ENCODE measurements at regions of chr16 and their contacts with region 1.

Region 1: GRCh38 chr16:89720813-89721545 is at the starts of genes VPS9D1 and ZNF276:
- DNase-seq: peak; percentile 81 to 84 (median 81)
- H3K4me3 ChIP-seq: peak within 1 kb of the TSS; percentile 78 to 96
- H3K4me3 Mint-ChIP-seq: peak within 1 kb of the TSS; percentile 92 to 99 (median 99)
- H3K27ac ChIP-seq: peak within 1 kb of the TSS; percentile 89
- H3K27ac Mint-ChIP-seq: peak within 1 kb of the TSS; percentile 97 to 100 (median 99)
- H3K4me1 ChIP-seq: peaks cover 48% of the 10 kb centered on the region
- H3K4me1 Mint-ChIP-seq: peaks cover 13 to 35% (median 25%) of the 10 kb centered on the region in 4 donors
- H3K27me3 ChIP-seq: no peaks in the 10 kb centered on the region
- H3K27me3 Mint-ChIP-seq: no peaks in the 10 kb centered on the region
- total RNA-seq, gene VPS9D1: 13.0 to 13.6 TPM
- total RNA-seq, gene ZNF276: 141 to 143 TPM

Region 2: GRCh38 chr16:88533932-88534732 is 1186.8 kb before region 1 on chr16:
- CTCF ChIA-PET with region 1: no interaction called
- POLR2A ChIA-PET with region 1: no interaction called
- intact Hi-C with region 1: no loop called
- DNase-seq: peak; percentile 62 to 82 (median 78)
- H3K4me3 ChIP-seq: no peak overlapping the region
- H3K4me3 Mint-ChIP-seq: peak overlapping the region in 5 of 8 donors; percentile 32 to 79 (median 43)
- H3K27ac ChIP-seq: peak overlapping the region; percentile 43
- H3K27ac Mint-ChIP-seq: peak overlapping the region in 1 of 7 donors; percentile 83
- H3K4me1 ChIP-seq: peaks cover 10% of the 10 kb centered on the region
- H3K4me1 Mint-ChIP-seq: peaks cover 5 to 18% (median 6%) of the 10 kb centered on the region in 4 donors
- H3K27me3 ChIP-seq: no peaks in the 10 kb centered on the region
- H3K27me3 Mint-ChIP-seq: no peaks in the 10 kb centered on the region

Region 3: GRCh38 chr16:89706507-89707263 is 14.3 kb before region 1 on chr16:
- CTCF ChIA-PET with region 1: interaction called, 25 read pairs
- POLR2A ChIA-PET with region 1: interaction called, 59 read pairs
- intact Hi-C with region 1: loop called (anchors 1 kb)
- DNase-seq: no peak
- H3K4me3 ChIP-seq: no peak overlapping the region
- H3K4me3 Mint-ChIP-seq: peak overlapping the region in 1 of 8 donors; percentile 43
- H3K27ac ChIP-seq: no peak overlapping the region
- H3K27ac Mint-ChIP-seq: no peak overlapping the region
- H3K4me1 ChIP-seq: peaks cover 13% of the 10 kb centered on the region
- H3K4me1 Mint-ChIP-seq: peaks cover 3 to 21% (median 12%) of the 10 kb centered on the region in 4 donors
- H3K27me3 ChIP-seq: no peaks in the 10 kb centered on the region
- H3K27me3 Mint-ChIP-seq: no peaks in the 10 kb centered on the region

Region 4: DNA sequence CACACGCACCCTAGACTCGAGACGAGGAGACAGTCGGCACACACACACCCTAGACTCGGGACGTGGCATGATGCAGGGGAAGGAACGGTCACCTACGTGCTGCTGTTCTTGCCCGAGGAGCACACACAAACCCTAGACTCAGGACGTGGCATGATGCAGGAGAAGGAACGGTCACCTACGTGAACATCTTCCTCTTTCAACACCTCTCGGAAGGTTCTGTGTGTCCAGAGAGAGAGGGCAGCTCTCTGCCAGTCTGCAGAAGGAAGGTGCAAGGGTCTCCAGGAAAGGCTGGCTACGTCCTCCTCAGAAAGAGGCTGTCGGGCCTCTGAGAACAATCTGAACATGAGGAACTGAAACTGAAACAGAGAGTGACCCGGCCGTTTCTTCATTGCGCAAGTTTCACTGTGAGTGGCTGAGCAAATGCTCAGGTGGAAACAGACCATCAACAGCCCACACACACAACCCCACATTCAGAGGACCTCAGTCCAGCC is 43.8 kb after region 1 on chr16:
- CTCF ChIA-PET with region 1: interaction called, 7 read pairs
- POLR2A ChIA-PET with region 1: interaction called, 50 read pairs
- intact Hi-C with region 1: loop called (anchors 1 kb)
- DNase-seq: peak; percentile 26 to 67 (median 35)
- H3K4me3 ChIP-seq: peak overlapping the region; percentile 49 to 56
- H3K4me3 Mint-ChIP-seq: peak overlapping the region; percentile 87 to 95 (median 92)
- H3K27ac ChIP-seq: peak overlapping the region; percentile 75
- H3K27ac Mint-ChIP-seq: peak overlapping the region; percentile 81 to 98 (median 96)
- H3K4me1 ChIP-seq: peaks cover 50% of the 10 kb centered on the region
- H3K4me1 Mint-ChIP-seq: peaks cover 32 to 53% (median 45%) of the 10 kb centered on the region in 4 donors
- H3K27me3 ChIP-seq: no peaks in the 10 kb centered on the region
- H3K27me3 Mint-ChIP-seq: no peaks in the 10 kb centered on the region

Region 5: GRCh38 chr16:89795676-89796075 is 74.7 kb after region 1 on chr16:
- CTCF ChIA-PET with region 1: interaction called, 23 read pairs
- POLR2A ChIA-PET with region 1: interaction called, 8 read pairs
- intact Hi-C with region 1: loop called (anchors 1 kb)
- DNase-seq: no peak
- H3K4me3 ChIP-seq: no peak overlapping the region
- H3K4me3 Mint-ChIP-seq: no peak overlapping the region
- H3K27ac ChIP-seq: no peak overlapping the region
- H3K27ac Mint-ChIP-seq: no peak overlapping the region
- H3K4me1 ChIP-seq: no peaks in the 10 kb centered on the region
- H3K4me1 Mint-ChIP-seq: peaks cover 6 to 14% (median 8%) of the 10 kb centered on the region in 4 donors
- H3K27me3 ChIP-seq: no peaks in the 10 kb centered on the region
- H3K27me3 Mint-ChIP-seq: no peaks in the 10 kb centered on the region

Region 6: GRCh38 chr16:89873972-89874689 is 153.2 kb after region 1 on chr16:
- CTCF ChIA-PET with region 1: interaction called, 5 read pairs
- POLR2A ChIA-PET with region 1: interaction called, 29 read pairs
- intact Hi-C with region 1: no loop called
- DNase-seq: peak; percentile 93 to 97 (median 94)
- H3K4me3 ChIP-seq: peak overlapping the region in 1 of 2 donors; percentile 88
- H3K4me3 Mint-ChIP-seq: peak overlapping the region; percentile 77 to 97 (median 92)
- H3K27ac ChIP-seq: peak overlapping the region; percentile 98
- H3K27ac Mint-ChIP-seq: peak overlapping the region; percentile 96 to 99 (median 98)
- H3K4me1 ChIP-seq: peaks cover 27% of the 10 kb centered on the region
- H3K4me1 Mint-ChIP-seq: peaks cover 4 to 31% (median 17%) of the 10 kb centered on the region in 4 donors
- H3K27me3 ChIP-seq: no peaks in the 10 kb centered on the region
- H3K27me3 Mint-ChIP-seq: no peaks in the 10 kb centered on the region

Region 7: GRCh38 chr16:89924297-89925276 is 203.6 kb after region 1 on chr16:
- CTCF ChIA-PET with region 1: no interaction called
- POLR2A ChIA-PET with region 1: no interaction called
- intact Hi-C with region 1: no loop called
- DNase-seq: peak in 4 of 5 donors; percentile 44 to 57 (median 46)
- H3K4me3 ChIP-seq: no peak overlapping the region
- H3K4me3 Mint-ChIP-seq: peak overlapping the region in 4 of 8 donors; percentile 22 to 76 (median 37)
- H3K27ac ChIP-seq: no peak overlapping the region
- H3K27ac Mint-ChIP-seq: peak overlapping the region in 2 of 7 donors; percentile 29 to 54
- H3K4me1 ChIP-seq: peaks cover 56% of the 10 kb centered on the region
- H3K4me1 Mint-ChIP-seq: peaks cover 15 to 33% (median 24%) of the 10 kb centered on the region in 4 donors
- H3K27me3 ChIP-seq: peaks cover 16% of the 10 kb centered on the region
- H3K27me3 Mint-ChIP-seq: peaks cover 4 to 19% of the 10 kb centered on the region in 2 donors

Measured in CD4-positive, alpha-beta memory T cell (primary cell).